T-cell (primary cell): ENCODE measurements at regions of chr1 and their contacts with region 1.

Region 1: DNA sequence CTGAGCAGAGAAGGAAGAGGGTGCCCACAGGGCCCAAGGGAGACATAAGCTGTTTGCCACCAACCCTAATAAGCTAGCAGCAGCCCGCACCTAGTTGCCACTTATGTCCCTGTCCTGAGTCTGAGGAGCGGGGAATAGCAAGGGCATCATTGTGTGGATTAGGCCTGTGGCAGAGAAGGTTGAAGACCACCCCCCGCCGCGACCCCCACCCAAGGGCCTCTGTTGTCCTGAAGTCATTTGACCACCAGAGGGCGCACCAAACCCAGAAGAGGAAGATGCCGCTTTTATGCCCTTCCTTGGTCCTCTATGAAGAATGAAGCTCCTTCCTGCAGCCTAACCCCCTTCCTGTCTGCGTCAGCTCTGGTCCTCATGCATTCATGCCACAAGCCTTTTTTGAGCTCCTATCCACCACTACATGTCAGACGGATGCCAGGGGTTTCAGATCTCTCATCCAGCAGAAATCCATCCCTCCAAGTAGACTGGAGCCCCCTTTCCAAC is 16.6 kb downstream of the RHBG start:
- DNase-seq: peak; percentile 52 to 86 (median 69)
- ATAC-seq: peak; percentile 80 to 92 (median 88)
- H3K4me3 ChIP-seq: no peak overlapping the region
- H3K4me3 Mint-ChIP-seq: no peak overlapping the region
- H3K27ac ChIP-seq: no peak overlapping the region
- H3K27ac Mint-ChIP-seq: no peak overlapping the region
- H3K4me1 ChIP-seq: peaks cover 0 to 13% of the 10 kb centered on the region in 2 experiments
- H3K4me1 Mint-ChIP-seq: peaks cover 4 to 10% (median 5%) of the 10 kb centered on the region in 3 donors
- H3K27me3 ChIP-seq: peaks cover 4 to 66% of the 10 kb centered on the region in 2 experiments
- H3K27me3 Mint-ChIP-seq: peaks cover 27 to 43% of the 10 kb centered on the region in 2 donors

Region 2: DNA sequence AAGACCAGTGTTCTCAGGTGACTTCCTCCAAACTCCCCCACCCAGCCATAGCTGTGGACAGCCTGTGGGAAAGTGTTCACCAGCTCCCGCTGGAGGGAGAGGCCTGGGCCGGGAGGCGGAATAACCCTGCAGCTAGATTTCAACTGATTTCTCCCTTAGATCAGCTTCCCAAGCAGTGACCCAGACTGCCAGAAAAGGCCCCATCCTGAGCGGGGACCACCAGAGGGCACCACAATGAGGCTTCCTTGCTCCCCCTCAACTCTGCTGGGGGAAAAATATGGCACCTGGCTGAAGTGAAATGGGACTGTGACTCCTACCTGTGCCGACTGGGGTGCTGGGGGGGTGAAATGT is 34.2 kb after region 1 on chr1:
- CTCF ChIA-PET with region 1: interaction called, 5 to 24 read pairs
- POLR2A ChIA-PET with region 1: no interaction called
- DNase-seq: peak in 29 of 35 experiments; percentile 10 to 66 (median 33)
- ATAC-seq: peak; percentile 35 to 54 (median 46)
- H3K4me3 ChIP-seq: peak overlapping the region; percentile 54 to 82
- H3K4me3 Mint-ChIP-seq: peak overlapping the region; percentile 87 to 96 (median 90)
- H3K27ac ChIP-seq: no peak overlapping the region
- H3K27ac Mint-ChIP-seq: no peak overlapping the region
- H3K4me1 ChIP-seq: peaks cover 15 to 31% of the 10 kb centered on the region in 2 experiments
- H3K4me1 Mint-ChIP-seq: peaks cover 25 to 29% (median 25%) of the 10 kb centered on the region in 3 donors
- H3K27me3 ChIP-seq: peaks cover 45 to 61% of the 10 kb centered on the region in 2 experiments
- H3K27me3 Mint-ChIP-seq: peaks cover 75 to 78% of the 10 kb centered on the region in 2 donors

Region 3: DNA sequence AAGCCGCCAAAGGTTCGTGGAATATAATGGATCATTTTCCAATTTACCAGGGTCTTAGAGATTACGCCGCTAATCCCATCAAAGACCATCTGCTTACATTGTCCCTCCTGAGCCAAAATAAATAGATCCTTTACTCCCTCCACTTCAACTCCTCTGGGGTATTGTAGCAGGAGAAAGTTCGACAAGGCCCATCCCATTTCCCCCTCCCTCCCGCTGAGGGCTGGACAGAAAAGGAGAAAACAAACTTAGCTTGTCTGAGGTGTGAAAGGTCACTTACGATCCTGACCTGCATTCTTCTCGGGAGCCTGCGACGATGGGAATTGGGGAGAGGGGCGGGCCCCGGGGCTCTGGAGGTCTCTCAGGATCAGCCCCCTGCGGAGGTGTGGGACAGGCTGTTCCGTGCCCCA is 54.2 kb after region 1 on chr1:
- CTCF ChIA-PET with region 1: interaction called, 58 to 143 read pairs
- POLR2A ChIA-PET with region 1: interaction called, 4 to 11 read pairs
- DNase-seq: no peak
- ATAC-seq: no peak
- H3K4me3 ChIP-seq: no peak overlapping the region
- H3K4me3 Mint-ChIP-seq: no peak overlapping the region
- H3K27ac ChIP-seq: no peak overlapping the region
- H3K27ac Mint-ChIP-seq: no peak overlapping the region
- H3K4me1 ChIP-seq: peaks cover 11 to 34% of the 10 kb centered on the region in 2 experiments
- H3K4me1 Mint-ChIP-seq: peaks cover 26 to 40% (median 29%) of the 10 kb centered on the region in 3 donors
- H3K27me3 ChIP-seq: peaks cover 37 to 72% of the 10 kb centered on the region in 2 experiments
- H3K27me3 Mint-ChIP-seq: peaks cover 68 to 83% of the 10 kb centered on the region in 2 donors

Region 4: GRCh38 chr1:156456622-156457465 is 71.3 kb after region 1 on chr1:
- CTCF ChIA-PET with region 1: interaction called in 1 of 2 experiments, 19 read pairs
- POLR2A ChIA-PET with region 1: no interaction called
- DNase-seq: peak; percentile 85 to 99 (median 96)
- ATAC-seq: peak; percentile 83 to 88 (median 85)
- H3K4me3 ChIP-seq: peak overlapping the region; percentile 74 to 77
- H3K4me3 Mint-ChIP-seq: peak overlapping the region; percentile 87 to 89 (median 88)
- H3K27ac ChIP-seq: peak overlapping the region; percentile 97
- H3K27ac Mint-ChIP-seq: peak overlapping the region; percentile 94 to 98
- H3K4me1 ChIP-seq: peaks cover 4 to 19% of the 10 kb centered on the region in 2 experiments
- H3K4me1 Mint-ChIP-seq: peaks cover 14 to 22% (median 19%) of the 10 kb centered on the region in 3 donors
- H3K27me3 ChIP-seq: no peaks in the 10 kb centered on the region
- H3K27me3 Mint-ChIP-seq: no peaks in the 10 kb centered on the region

Region 5: GRCh38 chr1:156608036-156608674 is 222.6 kb after region 1 on chr1:
- CTCF ChIA-PET with region 1: interaction called, 4 to 26 read pairs
- POLR2A ChIA-PET with region 1: no interaction called
- DNase-seq: peak in 33 of 35 experiments; percentile 29 to 87 (median 59)
- ATAC-seq: peak; percentile 86 to 95 (median 94)
- H3K4me3 ChIP-seq: no peak overlapping the region
- H3K4me3 Mint-ChIP-seq: no peak overlapping the region
- H3K27ac ChIP-seq: no peak overlapping the region
- H3K27ac Mint-ChIP-seq: no peak overlapping the region
- H3K4me1 ChIP-seq: peaks cover 0 to 8% of the 10 kb centered on the region in 2 experiments
- H3K4me1 Mint-ChIP-seq: peaks cover 9 to 15% (median 11%) of the 10 kb centered on the region in 3 donors
- H3K27me3 ChIP-seq: peaks cover 0 to 21% of the 10 kb centered on the region in 2 experiments
- H3K27me3 Mint-ChIP-seq: peaks cover 10 to 16% of the 10 kb centered on the region in 2 donors